Activated CD4-positive, alpha-beta memory T cell treated with anti-CD3 and anti-CD28 coated beads for 36 hours (primary cell): ENCODE measurements at regions of chr16 and their contacts with region 1.

Region 1: DNA sequence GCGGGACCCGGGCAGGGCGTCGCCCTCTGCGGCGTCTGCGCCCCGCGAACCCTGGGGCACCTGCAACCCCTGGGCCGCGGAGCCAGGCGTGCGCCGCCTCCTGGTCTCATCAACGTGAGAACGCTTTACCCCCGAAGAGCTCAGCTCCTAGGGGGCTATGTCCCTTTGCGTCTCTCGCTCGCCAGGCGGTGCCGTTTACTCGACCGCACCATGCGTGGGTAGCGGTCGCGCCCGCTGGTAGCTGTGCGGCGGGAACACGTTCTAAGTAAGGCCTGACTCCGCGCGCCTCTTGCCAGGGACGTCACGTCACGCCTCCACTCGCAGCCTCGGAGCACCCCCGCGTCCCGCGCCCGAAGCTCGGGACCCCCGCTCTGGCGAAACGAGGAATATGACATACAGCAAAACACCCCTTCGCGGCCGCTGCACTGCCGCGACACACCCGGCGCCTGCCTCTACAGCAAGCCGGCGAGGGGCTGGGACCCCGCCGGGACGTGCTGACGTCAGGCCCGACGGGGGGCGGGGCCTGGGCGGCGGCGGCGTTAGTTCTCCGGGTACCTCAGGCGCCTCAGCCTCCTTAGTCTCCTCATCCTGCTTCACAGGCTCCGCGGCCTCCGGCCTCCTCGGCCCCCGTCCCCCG is at the start of gene RAB11FIP3:
- DNase-seq: peak; percentile 87
- H3K4me3 Mint-ChIP-seq: peak within 1 kb of the TSS; percentile 82
- H3K27ac Mint-ChIP-seq: no peak within 1 kb of the TSS
- H3K4me1 Mint-ChIP-seq: peaks cover 31% of the 10 kb centered on the region
- H3K27me3 Mint-ChIP-seq: no peaks in the 10 kb centered on the region
- total RNA-seq, gene RAB11FIP3: 14.8 to 18.4 TPM

Region 2: DNA sequence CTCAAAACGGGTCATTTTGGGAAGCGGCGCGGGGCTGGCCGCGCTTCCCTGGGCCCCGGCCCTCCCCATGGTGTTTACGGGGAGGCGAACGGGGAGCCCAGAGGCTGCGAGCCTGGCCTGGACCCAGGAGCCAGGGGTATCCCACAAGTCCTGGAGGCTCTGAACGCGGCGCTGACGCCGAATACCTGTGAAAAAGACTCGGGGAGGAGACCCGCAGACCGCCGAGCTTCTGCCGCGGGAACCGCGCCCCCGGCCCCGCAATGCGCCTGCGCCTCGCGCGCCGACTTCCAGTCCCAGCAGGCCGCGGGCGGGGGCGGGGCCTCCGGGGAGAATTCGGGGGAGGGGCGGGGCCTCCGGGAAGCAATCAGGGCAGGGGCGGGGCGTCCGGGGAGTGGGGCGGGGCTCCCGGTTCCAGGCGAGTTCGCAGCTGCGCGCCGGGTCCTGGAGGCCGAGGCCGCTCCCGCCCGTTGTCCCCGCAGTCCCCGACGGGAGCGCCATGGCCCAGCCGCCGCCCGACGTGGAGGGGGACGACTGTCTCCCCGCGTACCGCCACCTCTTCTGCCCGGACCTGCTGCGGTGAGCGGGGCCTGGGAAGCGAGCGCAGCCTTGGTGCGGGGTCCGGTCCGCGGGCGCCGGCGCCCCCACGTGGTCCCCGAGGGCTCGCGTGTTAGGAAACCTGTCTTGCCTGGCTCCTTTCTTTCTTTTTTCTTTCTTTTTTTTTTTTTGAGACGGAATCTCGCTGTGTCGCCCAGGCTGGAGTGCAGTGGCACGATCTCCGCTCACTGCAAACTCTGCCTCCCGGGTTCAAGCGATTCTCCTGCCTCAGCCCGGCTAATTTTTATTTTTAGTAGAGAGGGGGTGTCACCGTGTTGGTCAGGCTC is 23.5 kb before region 1 on chr16 and contains the start of gene DECR2:
- CTCF ChIA-PET with region 1: interaction called, 5 read pairs
- POLR2A ChIA-PET with region 1: interaction called, 6 read pairs
- intact Hi-C with region 1: loop called (anchors 1 kb)
- DNase-seq: peak; percentile 99
- H3K4me3 Mint-ChIP-seq: peak within 1 kb of the TSS; percentile 84
- H3K27ac Mint-ChIP-seq: peak within 1 kb of the TSS; percentile 82
- H3K4me1 Mint-ChIP-seq: peaks cover 18% of the 10 kb centered on the region
- H3K27me3 Mint-ChIP-seq: no peaks in the 10 kb centered on the region
- total RNA-seq, gene DECR2: 8.5 to 8.8 TPM

Region 3: GRCh38 chr16:483341-484075 is 58.3 kb after region 1 on chr16:
- CTCF ChIA-PET with region 1: no interaction called
- POLR2A ChIA-PET with region 1: no interaction called
- intact Hi-C with region 1: no loop called
- DNase-seq: no peak
- H3K4me3 Mint-ChIP-seq: no peak overlapping the region
- H3K27ac Mint-ChIP-seq: no peak overlapping the region
- H3K4me1 Mint-ChIP-seq: no peaks in the 10 kb centered on the region
- H3K27me3 Mint-ChIP-seq: no peaks in the 10 kb centered on the region

Region 4: GRCh38 chr16:546909-547770 is 121.9 kb after region 1 on chr16:
- CTCF ChIA-PET with region 1: no interaction called
- POLR2A ChIA-PET with region 1: no interaction called
- intact Hi-C with region 1: no loop called
- DNase-seq: peak; percentile 57
- H3K4me3 Mint-ChIP-seq: no peak overlapping the region
- H3K27ac Mint-ChIP-seq: no peak overlapping the region
- H3K4me1 Mint-ChIP-seq: no peaks in the 10 kb centered on the region
- H3K27me3 Mint-ChIP-seq: no peaks in the 10 kb centered on the region